ENCODE measurements at regions of chr17 and their contacts with region 1.

Region 1: DNA sequence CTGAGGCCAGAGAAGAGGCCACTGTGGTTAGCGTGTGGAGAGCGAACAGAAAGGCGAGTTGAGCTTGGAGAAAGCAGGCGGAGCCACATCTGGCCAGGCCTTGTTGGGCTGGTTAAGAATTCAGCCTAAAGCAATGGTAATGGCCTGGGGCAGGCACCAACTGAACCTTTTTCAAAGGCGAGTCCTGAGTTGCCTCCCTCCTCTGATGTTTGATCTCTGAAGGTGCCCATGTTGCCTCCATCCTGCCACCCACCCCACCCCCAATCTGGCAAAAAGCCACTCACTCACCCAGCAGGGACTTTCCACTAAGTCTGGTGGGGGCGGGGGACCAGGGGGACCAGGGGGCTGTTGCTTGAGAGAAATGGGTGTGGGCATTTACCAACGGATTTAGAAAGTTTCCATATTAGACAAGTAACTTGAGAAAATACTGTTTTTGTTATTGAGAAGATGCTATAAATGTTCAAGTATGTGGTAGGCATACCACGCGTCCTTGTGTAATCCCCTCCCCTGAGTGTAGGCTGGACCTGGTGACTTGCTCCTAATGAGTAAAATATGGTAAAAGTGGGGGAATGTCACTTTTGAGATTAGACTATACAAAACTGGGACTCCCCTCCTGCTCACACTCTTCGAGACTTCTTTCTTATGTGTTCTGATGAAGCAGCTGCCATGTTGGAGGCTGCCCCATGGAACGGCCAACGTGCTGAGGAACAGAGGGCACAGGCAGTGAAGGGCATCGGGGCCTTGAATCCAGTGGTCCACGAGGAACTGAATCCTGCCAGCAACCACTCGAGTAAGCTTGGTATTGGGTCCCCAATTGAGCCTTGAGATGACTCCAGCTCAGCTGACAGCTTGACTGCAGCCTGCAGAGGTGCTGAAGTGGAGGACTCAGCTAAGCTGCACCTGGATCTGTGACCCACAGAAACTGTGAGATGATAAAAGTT is 29.9 kb upstream of the TNS4 start:
- DNase-seq: peak; percentile 72
- H3K4me3 Mint-ChIP-seq: no peak overlapping the region
- H3K27ac Mint-ChIP-seq: peak overlapping the region; percentile 95
- H3K4me1 Mint-ChIP-seq: peaks cover 93% of the 10 kb centered on the region
- H3K27me3 Mint-ChIP-seq: peaks cover 8% of the 10 kb centered on the region

Region 2: GRCh38 chr17:40417609-40418427 is 113.5 kb before region 1 on chr17 and contains the start of gene TOP2A:
- CTCF ChIA-PET with region 1: interaction called, 52 read pairs
- DNase-seq: peak; percentile 97
- H3K4me3 Mint-ChIP-seq: peak within 1 kb of the TSS; percentile 90
- H3K27ac Mint-ChIP-seq: peak within 1 kb of the TSS; percentile 92
- H3K4me1 Mint-ChIP-seq: peaks cover 51% of the 10 kb centered on the region
- H3K27me3 Mint-ChIP-seq: peaks cover 3% of the 10 kb centered on the region

Region 3: DNA sequence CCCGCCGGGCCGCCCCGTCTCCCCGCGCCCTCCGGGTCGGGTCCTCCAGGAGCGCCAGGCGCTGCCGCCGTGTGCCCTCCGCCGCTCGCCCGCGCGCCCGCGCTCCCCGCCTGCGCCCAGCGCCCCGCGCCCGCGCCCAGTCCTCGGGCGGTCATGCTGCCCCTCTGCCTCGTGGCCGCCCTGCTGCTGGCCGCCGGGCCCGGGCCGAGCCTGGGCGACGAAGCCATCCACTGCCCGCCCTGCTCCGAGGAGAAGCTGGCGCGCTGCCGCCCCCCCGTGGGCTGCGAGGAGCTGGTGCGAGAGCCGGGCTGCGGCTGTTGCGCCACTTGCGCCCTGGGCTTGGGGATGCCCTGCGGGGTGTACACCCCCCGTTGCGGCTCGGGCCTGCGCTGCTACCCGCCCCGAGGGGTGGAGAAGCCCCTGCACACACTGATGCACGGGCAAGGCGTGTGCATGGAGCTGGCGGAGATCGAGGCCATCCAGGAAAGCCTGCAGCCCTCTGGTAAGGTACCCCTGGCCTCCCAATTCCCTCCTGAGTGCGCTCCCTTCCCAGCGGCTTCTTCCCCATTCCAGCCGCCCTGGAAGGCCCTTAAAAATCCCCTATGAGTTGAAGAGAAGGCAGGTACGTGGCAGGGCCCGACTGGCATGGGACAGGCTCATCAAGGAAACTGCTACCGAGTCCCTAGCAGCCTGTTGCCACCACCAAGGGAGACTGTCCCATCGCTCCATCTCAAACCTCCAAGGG is 87.6 kb before region 1 on chr17:
- CTCF ChIA-PET with region 1: interaction called, 73 read pairs
- DNase-seq: peak; percentile 81
- H3K4me3 Mint-ChIP-seq: peak overlapping the region; percentile 82
- H3K27ac Mint-ChIP-seq: peak overlapping the region; percentile 92
- H3K4me1 Mint-ChIP-seq: peaks cover 59% of the 10 kb centered on the region
- H3K27me3 Mint-ChIP-seq: peaks cover 38% of the 10 kb centered on the region

Region 4: GRCh38 chr17:40474419-40475002 is 56.8 kb before region 1 on chr17:
- CTCF ChIA-PET with region 1: interaction called, 75 read pairs
- DNase-seq: no peak
- H3K4me3 Mint-ChIP-seq: no peak overlapping the region
- H3K27ac Mint-ChIP-seq: no peak overlapping the region
- H3K4me1 Mint-ChIP-seq: peaks cover 50% of the 10 kb centered on the region
- H3K27me3 Mint-ChIP-seq: peaks cover 33% of the 10 kb centered on the region

Region 5: DNA sequence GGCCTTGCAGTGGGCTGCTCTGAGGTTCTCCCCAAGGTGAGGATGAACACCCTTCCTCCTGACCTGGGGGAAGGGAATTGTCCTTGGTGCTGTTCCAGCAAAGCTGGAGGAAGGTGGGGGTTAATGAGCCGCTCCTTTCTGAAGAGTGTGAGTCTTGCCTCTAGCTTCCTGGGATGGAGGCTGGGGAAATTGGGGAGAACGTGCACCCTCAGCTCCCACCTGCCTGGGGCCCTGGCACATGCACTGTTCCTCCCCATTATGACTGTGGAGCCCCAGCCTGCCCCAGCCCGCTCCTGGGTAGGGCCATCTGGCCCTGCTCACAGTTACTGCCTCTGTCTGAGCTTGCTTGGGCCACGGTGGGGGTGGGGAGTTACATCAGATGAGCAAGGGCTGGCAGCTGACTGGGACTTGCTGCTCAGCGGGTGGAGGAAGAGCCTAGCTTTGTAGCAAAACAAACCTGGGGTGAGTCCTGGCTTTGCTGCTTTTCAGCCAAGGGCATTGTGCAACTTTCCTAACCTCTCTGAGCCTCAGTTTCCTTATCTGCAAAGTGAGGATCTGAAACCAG is 41.0 kb before region 1 on chr17:
- CTCF ChIA-PET with region 1: interaction called, 16 read pairs
- DNase-seq: peak; percentile 70
- H3K4me3 Mint-ChIP-seq: peak overlapping the region; percentile 64
- H3K27ac Mint-ChIP-seq: peak overlapping the region; percentile 94
- H3K4me1 Mint-ChIP-seq: peaks cover 72% of the 10 kb centered on the region
- H3K27me3 Mint-ChIP-seq: no peaks in the 10 kb centered on the region

Region 6: DNA sequence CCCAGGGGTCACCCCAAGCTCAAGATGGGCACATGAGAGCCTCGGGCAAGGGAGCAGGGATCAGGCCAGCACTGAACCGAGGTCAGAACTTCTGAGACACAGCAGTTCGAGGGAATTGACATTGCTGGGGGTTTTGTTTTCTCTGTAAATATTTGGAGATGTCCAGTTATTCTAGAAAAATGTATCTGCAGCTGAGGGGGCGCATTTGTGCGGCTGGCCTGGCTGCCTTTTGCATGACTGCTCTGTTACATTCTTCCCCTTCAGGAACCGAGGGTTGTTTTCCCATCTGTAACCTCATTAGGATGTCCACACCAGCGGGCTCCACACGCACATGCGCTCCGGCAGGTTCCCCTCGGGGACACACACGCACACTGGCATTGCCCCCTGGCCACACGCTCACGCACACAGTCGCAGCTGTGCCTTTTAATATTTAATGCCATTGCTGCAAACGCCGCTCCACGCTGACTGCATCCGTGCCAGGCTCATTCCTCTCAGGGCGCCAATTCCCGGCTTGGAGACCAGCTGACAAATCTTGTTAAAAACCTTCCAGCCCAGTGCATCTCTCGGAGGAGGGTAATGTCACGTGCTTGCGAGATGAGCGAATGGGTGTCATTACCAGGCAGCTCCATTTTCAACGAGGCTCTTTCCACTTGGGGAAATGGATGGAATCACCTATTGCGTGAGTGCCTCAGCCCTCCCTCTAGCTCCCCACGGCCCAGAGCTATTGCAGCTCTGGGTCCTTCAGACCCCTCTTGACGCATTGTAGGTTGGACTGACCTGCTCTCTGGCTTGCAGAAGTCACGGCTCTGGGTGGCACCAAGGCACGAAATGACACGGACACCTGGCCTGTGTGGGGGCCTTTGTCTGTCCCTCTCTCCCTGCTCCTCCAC is 20.8 kb after region 1 on chr17:
- CTCF ChIA-PET with region 1: interaction called, 271 read pairs
- DNase-seq: peak; percentile 19
- H3K4me3 Mint-ChIP-seq: no peak overlapping the region
- H3K27ac Mint-ChIP-seq: peak overlapping the region; percentile 75
- H3K4me1 Mint-ChIP-seq: peaks cover 100% of the 10 kb centered on the region
- H3K27me3 Mint-ChIP-seq: peaks cover 5% of the 10 kb centered on the region